Psoas muscle (tissue), 8 donors: ENCODE measurements at regions of chr3 and their contacts with region 1.

Region 1: GRCh38 chr3:141863491-141863890 is 13.0 kb upstream of the ATP1B3 start:
- DNase-seq: no peak
- ATAC-seq: no peak
- H3K4me3 ChIP-seq: no peak overlapping the region
- H3K27ac ChIP-seq: no peak overlapping the region
- H3K4me1 ChIP-seq: peaks cover 5% of the 10 kb centered on the region
- H3K27me3 ChIP-seq: no peaks in the 10 kb centered on the region
- CTCF ChIP-seq: no peak

Region 2: GRCh38 chr3:141795276-141795675 is 68.2 kb before region 1 on chr3:
- intact Hi-C with region 1: loop called in 1 of 2 experiments (anchors 5 kb)
- DNase-seq: no peak
- ATAC-seq: no peak
- H3K4me3 ChIP-seq: no peak overlapping the region
- H3K27ac ChIP-seq: no peak overlapping the region
- H3K4me1 ChIP-seq: peaks cover 11% of the 10 kb centered on the region
- H3K27me3 ChIP-seq: no peaks in the 10 kb centered on the region
- CTCF ChIP-seq: no peak